MCF 10A (cell line): ENCODE measurements at regions of chr1 and their contacts with region 1.

Region 1: GRCh38 chr1:52281518-52281917 is 84.5 kb downstream of the CC2D1B start:
- DNase-seq: no peak
- H3K4me3 Mint-ChIP-seq: no peak overlapping the region
- H3K27ac Mint-ChIP-seq: no peak overlapping the region
- H3K4me1 Mint-ChIP-seq: no peaks in the 10 kb centered on the region
- H3K27me3 Mint-ChIP-seq: no peaks in the 10 kb centered on the region
- CTCF ChIP-seq: no peak

Region 2: DNA sequence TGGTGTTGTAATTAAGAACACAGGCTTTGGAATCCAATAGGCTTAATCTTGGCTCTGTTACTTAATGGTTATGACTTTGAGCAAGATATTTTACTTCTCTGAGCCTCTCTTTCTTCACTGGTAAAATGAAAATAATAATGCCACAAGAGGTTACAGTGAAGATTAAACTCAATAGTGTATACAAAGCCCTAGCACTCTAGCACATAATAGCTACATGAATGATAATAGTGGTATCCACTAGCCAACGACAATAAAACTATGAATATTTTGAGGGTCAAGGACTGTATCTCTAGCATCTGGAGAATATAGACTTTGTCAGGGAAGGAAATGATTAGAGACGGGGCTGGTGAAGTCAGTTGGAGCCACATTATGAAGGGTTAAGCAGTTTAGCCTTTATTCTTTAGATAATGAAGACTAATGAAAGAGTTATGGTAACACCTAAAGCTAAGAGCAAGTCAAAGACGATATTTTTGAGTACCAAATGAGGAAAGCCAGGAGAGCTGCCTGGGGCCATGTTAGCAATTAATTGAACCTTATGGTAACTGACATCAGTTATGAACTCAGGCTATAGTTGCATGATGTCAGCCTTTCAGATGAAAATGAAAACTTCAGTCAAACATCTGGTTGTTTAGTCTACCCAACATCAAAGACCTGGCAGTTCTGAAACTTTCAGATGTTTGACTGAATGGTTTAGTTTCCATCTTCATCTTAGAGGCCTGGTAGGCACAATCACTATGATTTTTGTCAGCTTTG is 1078.2 kb before region 1 on chr1:
- CTCF ChIA-PET with region 1: no interaction called
- POLR2A ChIA-PET with region 1: no interaction called
- intact Hi-C with region 1: no loop called
- DNase-seq: no peak
- H3K4me3 Mint-ChIP-seq: no peak overlapping the region
- H3K27ac Mint-ChIP-seq: no peak overlapping the region
- H3K4me1 Mint-ChIP-seq: no peaks in the 10 kb centered on the region
- H3K27me3 Mint-ChIP-seq: no peaks in the 10 kb centered on the region
- CTCF ChIP-seq: no peak

Region 3: DNA sequence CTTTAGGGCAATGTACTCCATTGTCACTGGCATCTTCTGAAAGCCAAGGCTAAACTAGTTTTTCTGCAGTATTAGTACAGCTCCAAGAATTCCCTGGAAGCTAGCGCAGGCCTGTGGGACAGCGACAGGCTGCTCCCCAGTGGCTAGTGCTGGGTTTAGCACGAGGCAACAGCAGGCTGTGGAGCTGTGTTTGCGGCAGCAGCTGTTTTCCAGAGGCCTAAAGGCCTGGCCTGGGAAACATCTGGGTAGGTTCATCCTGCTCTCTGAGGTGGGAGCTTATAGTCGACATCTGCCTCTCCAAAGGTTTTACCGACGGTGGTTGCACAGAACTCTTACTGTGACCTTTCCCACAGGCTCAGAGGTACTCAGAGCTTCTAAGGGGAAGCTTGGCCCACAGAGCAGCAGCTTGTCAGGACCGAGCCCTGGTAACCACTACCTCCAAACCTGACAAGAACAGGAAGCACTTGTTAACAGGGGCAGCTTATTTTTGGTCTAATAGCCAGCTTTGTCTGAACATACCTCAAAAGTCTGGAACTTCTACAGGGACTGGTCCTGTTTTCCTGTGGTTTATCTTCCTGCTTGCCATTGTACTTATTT is 67.3 kb after region 1 on chr1:
- CTCF ChIA-PET with region 1: interaction called, 10 read pairs
- POLR2A ChIA-PET with region 1: no interaction called
- intact Hi-C with region 1: no loop called
- DNase-seq: peak; percentile 13
- H3K4me3 Mint-ChIP-seq: no peak overlapping the region
- H3K27ac Mint-ChIP-seq: no peak overlapping the region
- H3K4me1 Mint-ChIP-seq: no peaks in the 10 kb centered on the region
- H3K27me3 Mint-ChIP-seq: no peaks in the 10 kb centered on the region
- CTCF ChIP-seq: no peak